MCF 10A (cell line): ENCODE measurements at regions of chr19 and their contacts with region 1.

Region 1: DNA sequence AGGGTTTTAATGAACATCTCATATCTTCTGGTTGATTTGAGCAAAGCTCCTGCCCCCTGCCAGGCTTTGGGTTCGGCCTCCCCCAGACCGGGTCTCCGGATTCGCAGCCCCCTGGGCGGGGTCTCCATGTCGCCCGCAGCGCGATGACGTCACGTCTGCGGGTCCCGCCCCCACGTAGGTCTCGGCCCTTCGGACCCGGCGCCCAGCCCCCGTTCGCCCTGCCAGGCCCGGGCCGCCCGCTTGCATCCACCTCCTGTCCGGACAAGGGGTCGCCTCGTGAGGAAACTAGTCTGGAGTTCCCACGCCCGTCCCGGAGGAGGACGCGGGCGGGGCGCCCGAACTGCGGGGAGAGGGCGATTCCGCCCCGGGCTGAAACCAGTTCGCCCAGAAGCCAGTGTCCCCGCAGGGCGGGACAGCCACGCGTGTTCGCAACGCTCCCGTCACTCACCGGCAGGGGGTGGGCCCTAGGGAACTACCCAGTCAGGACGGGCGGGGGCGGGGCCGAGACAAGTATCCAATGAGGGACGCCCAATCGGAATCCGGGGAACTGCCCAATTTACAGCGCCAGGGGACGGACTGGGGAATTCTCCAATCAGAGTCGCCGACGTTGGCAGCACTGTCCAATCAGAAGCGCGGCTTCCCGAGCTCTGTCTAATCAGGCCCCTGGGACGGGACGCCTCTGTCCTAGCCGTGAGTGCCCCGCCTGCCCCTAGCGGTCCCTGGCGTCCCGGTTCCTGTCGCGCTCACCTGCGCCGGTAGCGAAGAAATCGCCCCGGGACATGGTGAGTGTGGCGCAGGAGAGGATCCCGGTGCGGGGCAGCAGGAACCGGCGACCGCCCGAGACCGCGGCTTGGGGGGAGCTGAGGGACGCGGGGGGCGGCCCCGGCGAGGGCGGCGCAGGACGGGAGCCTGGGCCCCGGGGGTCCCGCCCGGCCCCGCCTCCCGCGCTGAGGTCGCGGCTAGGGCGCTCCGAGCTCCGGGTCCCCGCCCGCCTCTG is at the start of gene ZNF555:
- DNase-seq: peak; percentile 100
- H3K4me3 Mint-ChIP-seq: peak within 1 kb of the TSS; percentile 83
- H3K27ac Mint-ChIP-seq: peak within 1 kb of the TSS; percentile 86
- H3K4me1 Mint-ChIP-seq: peaks cover 6% of the 10 kb centered on the region
- H3K27me3 Mint-ChIP-seq: no peaks in the 10 kb centered on the region
- CTCF ChIP-seq: peak; percentile 27
- total RNA-seq, gene ZNF555: 4.9 and 6.6 TPM in 2 replicates

Region 2: DNA sequence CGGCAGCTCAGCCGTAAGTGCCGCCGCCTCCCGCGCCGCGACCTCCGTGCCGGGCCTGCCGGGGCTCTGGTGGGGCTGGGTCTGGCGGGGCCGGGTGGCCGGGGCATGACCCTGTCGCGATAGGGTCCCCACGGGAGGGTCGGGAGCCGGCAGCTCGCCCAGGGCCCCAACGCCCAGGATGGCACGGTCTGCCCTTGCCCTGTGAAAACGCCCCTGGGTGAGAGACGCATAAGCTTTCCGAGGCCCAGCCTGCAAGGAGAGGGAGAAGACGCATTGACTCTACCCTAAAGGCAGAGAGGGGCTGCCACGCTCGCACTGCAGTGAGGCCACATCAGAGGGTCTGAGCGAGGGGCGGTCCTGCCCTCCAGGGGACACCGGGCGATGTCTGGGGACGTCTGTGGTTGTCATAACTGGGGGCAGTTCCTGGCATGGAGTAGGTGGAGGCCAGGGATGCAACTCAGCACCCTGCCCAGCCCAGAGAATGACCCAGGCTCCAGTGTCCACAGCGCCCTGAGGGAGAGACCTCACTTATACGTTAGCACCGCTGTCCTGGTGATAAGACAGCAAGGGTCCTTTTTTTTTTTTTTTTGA is 20.9 kb before region 1 on chr19:
- CTCF ChIA-PET with region 1: interaction called, 3 read pairs
- POLR2A ChIA-PET with region 1: interaction called, 11 read pairs
- intact Hi-C with region 1: no loop called
- DNase-seq: no peak
- H3K4me3 Mint-ChIP-seq: peak overlapping the region; percentile 79
- H3K27ac Mint-ChIP-seq: peak overlapping the region; percentile 75
- H3K4me1 Mint-ChIP-seq: peaks cover 4% of the 10 kb centered on the region
- H3K27me3 Mint-ChIP-seq: no peaks in the 10 kb centered on the region
- CTCF ChIP-seq: no peak